ENCODE measurements at regions of chr3 and their contacts with region 1.

Region 1: DNA sequence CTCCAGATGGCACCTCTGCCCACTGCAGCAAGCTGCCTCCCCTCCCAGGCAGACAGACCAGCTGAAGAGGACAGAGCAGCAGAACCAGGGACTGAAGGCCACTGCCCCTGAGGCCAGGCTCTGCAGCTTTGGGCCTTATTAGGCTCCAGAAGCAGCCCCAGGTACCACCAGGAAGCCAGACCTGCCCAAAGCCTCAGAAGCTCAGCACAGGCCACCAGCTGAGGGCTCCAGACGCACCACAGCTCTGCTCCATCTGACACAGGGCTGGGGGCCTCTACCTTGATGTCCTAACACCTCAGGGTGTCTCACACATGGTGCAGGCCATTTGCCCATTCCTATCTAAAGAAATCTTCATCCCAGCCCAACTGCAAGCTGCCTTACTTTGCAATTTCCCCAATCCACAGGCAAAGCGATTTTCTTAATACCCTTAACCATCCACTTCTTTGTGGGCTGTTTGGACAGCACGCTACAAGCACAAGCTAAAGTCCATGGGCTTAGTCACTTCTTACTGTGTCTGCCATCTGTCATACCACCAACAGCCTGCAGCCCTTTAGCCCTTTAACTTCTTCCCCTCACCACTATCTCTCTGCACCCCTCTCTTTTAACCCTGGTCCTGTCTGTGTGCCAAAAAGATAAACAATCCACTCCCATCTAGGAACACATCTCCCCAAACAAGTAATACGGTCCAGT is 112.1 kb downstream of the IQSEC1 start:
- DNase-seq: no peak
- ATAC-seq: no peak
- H3K4me3 Mint-ChIP-seq: peak overlapping the region; percentile 70
- H3K27ac Mint-ChIP-seq: peak overlapping the region; percentile 67
- H3K4me1 Mint-ChIP-seq: peaks cover 99% of the 10 kb centered on the region
- H3K27me3 Mint-ChIP-seq: no peaks in the 10 kb centered on the region
- CTCF ChIP-seq: no peak

Region 2: GRCh38 chr3:12973827-12974226 is 12.7 kb after region 1 on chr3:
- CTCF ChIA-PET with region 1: no interaction called
- POLR2A ChIA-PET with region 1: interaction called, 11 read pairs
- intact Hi-C with region 1: no loop called
- DNase-seq: no peak
- ATAC-seq: peak; percentile 61
- H3K4me3 Mint-ChIP-seq: no peak overlapping the region
- H3K27ac Mint-ChIP-seq: no peak overlapping the region
- H3K4me1 Mint-ChIP-seq: peaks cover 81% of the 10 kb centered on the region
- H3K27me3 Mint-ChIP-seq: no peaks in the 10 kb centered on the region
- CTCF ChIP-seq: no peak

Region 3: GRCh38 chr3:13058346-13059120 is 97.4 kb after region 1 on chr3:
- CTCF ChIA-PET with region 1: no interaction called
- POLR2A ChIA-PET with region 1: no interaction called
- intact Hi-C with region 1: no loop called
- DNase-seq: no peak
- ATAC-seq: no peak
- H3K4me3 Mint-ChIP-seq: no peak overlapping the region
- H3K27ac Mint-ChIP-seq: no peak overlapping the region
- H3K4me1 Mint-ChIP-seq: peaks cover 30% of the 10 kb centered on the region
- H3K27me3 Mint-ChIP-seq: no peaks in the 10 kb centered on the region
- CTCF ChIP-seq: no peak